Aorta (tissue), 5 donors: ENCODE measurements at regions of chr2 and their contacts with region 1.

Region 1: DNA sequence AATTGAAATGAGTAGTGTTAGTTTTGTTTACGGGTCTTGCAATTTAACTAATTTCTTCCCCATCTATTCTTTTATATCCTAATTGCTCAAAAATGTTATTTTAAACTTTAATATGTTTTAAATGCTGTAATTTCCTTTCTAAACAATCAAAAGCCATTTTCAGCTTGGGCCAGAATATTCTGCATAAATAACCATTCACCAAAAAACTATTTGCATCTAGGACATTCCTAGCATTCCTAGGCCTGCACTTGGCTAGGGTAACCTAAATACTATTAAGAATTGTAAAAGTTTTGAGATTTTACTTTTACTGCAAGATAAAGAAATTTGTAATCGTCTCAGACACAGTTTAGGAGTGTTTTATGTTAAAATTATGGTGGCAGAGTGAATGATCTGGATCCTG is 7.8 kb upstream of the ETAA1 start:
- DNase-seq: no peak
- ATAC-seq: no peak
- H3K4me3 ChIP-seq: no peak overlapping the region
- H3K27ac ChIP-seq: peak overlapping the region in 1 of 2 donors; percentile 28
- H3K4me1 ChIP-seq: peaks cover 4% of the 10 kb centered on the region in 2 donors
- H3K27me3 ChIP-seq: no peaks in the 10 kb centered on the region

Region 2: DNA sequence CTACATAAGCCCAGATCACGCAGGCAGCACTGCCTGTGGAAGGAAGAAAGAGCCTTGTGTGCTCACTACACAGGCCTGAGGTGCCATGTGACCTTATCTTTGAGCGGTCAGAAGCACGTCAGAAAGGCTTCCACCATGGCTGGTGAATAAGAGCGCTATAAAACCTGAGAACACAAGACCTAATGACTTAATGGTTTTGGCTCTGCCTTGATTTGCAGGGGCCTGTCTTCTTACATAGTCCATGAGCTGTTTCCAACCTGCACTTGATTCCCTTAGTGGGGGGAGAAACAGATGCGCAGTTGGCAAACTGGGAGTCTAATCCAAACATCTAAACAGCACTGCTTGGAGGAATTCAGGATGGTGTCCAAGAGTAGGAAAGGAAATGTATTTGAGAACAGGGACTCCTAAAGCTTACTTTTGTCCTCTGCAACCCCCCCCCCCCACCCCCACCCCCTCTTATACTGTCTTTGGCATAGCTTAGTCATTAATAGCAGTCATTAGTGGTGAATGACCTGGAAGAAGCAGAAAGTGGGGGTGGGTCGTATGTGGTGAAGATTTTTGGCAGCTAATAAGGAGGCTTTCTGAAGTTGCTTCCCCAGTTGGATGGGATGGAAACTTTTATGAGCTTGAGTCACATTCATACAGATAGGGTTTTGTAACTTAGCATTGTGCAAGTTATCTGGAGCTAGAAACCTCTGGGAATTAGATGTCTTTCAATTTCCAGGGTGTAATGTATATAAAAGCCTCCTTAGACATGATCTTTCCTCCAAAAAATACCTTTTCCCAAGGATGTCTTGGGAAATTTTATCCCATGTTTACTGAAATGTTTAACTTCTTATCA is 500.3 kb before region 1 on chr2:
- intact Hi-C with region 1: no loop called
- DNase-seq: no peak
- ATAC-seq: no peak
- H3K4me3 ChIP-seq: no peak overlapping the region
- H3K27ac ChIP-seq: no peak overlapping the region
- H3K4me1 ChIP-seq: no peaks in the 10 kb centered on the region
- H3K27me3 ChIP-seq: no peaks in the 10 kb centered on the region

Region 3: GRCh38 chr2:67259581-67260342 is 129.5 kb before region 1 on chr2:
- intact Hi-C with region 1: loop called (anchors 5 to 10 kb)
- DNase-seq: peak; percentile 56 to 66
- ATAC-seq: peak; percentile 60
- H3K4me3 ChIP-seq: peak overlapping the region in 1 of 2 donors; percentile 66
- H3K27ac ChIP-seq: peak overlapping the region; percentile 38 to 99
- H3K4me1 ChIP-seq: peaks cover 0 to 3% of the 10 kb centered on the region in 2 donors
- H3K27me3 ChIP-seq: no peaks in the 10 kb centered on the region